A673 (cell line): ENCODE measurements at regions of chr18 and their contacts with region 1.

Region 1: DNA sequence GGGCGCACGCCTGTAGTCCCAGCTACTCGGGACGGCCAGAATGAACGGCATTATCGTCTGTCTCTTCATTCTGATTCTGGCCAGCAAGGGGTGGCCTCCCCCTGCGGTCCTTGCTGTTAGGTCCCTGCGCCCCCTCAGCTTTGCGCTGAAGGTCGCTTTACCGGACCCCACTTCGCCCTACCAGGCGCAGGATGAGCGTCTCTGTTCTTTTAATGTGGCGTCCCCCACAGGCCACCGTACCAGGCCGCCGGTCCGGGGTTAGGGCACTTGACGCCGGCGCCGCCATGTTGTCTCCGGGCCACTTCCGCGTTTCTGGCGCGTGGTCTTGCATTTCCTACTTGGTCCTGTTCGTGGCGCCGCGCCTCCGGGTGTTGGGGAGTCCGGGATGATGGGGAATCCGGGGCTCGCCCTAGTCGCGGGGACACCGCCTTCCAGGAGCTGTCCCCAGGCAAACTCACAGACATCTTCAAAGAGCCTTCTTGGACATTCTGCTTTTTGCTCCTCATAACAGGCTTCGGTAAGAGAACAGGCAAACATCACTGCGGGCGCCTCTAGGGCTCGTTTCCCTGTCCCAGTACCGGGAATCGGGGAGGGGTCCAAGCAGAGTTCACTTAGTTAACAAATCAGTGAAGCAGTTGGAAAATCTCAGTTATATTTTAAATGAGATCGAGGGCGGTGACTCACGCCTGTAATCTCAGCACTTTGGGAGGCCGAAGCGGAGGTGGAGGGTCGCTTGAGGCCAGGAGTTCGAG is 8.5 kb upstream of the NARS1 start:
- DNase-seq: peak; percentile 98
- H3K4me3 ChIP-seq: peak overlapping the region; percentile 60
- H3K27ac ChIP-seq: peak overlapping the region; percentile 80
- H3K4me1 ChIP-seq: peaks cover 25% of the 10 kb centered on the region
- H3K27me3 ChIP-seq: no peaks in the 10 kb centered on the region
- CTCF ChIP-seq: peak; percentile 89

Region 2: GRCh38 chr18:57780706-57781347 is 150.6 kb after region 1 on chr18:
- CTCF ChIA-PET with region 1: no interaction called
- POLR2A ChIA-PET with region 1: no interaction called
- intact Hi-C with region 1: loop called (anchors 5 kb)
- DNase-seq: peak; percentile 65
- H3K4me3 ChIP-seq: peak overlapping the region; percentile 18
- H3K27ac ChIP-seq: peak overlapping the region; percentile 97
- H3K4me1 ChIP-seq: peaks cover 98% of the 10 kb centered on the region
- H3K27me3 ChIP-seq: no peaks in the 10 kb centered on the region
- CTCF ChIP-seq: no peak

Region 3: DNA sequence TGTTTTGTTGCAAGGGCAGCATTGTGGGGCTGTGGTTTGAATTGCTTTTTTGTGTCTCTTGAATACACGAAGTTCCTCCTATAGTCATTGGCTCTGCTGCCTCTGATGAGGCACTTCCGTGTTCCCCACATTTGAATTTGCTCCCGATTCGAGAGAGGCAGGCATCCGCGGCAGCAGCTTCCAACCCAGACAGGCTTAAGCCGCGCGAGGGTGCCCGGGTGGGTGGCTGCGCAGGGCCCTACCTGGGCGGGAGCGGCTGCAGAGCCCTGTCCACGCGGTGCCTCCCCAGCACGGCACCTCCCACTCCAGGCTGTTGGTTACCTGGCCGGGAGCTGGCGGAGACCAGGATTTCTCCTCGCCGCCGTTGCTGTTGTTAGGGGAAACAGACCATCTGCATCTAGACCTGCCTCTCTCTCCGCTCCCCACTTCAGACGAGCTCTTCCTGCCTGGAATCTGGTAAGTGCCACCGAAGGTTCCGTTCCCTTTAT is 565.1 kb after region 1 on chr18:
- CTCF ChIA-PET with region 1: no interaction called
- POLR2A ChIA-PET with region 1: no interaction called
- intact Hi-C with region 1: no loop called
- DNase-seq: no peak
- H3K4me3 ChIP-seq: peak overlapping the region; percentile 6
- H3K27ac ChIP-seq: no peak overlapping the region
- H3K4me1 ChIP-seq: no peaks in the 10 kb centered on the region
- H3K27me3 ChIP-seq: no peaks in the 10 kb centered on the region
- CTCF ChIP-seq: no peak